Activated CD4-positive, alpha-beta T cell treated with anti-CD3 and anti-CD28 coated beads, Interleukin-2, amount 10 ng/mL, durations not matched to agents 24 days and 14 days (primary cell): ENCODE measurements at regions of chr3 and their contacts with region 1.

Region 1: GRCh38 chr3:142993958-142994442 is 7.4 kb upstream of the U2SURP start:
- DNase-seq: peak; percentile 88
- H3K4me3 Mint-ChIP-seq: no peak overlapping the region
- H3K27ac Mint-ChIP-seq: no peak overlapping the region
- H3K4me1 Mint-ChIP-seq: peaks cover 4% of the 10 kb centered on the region
- H3K27me3 Mint-ChIP-seq: peaks cover 22% of the 10 kb centered on the region

Region 2: DNA sequence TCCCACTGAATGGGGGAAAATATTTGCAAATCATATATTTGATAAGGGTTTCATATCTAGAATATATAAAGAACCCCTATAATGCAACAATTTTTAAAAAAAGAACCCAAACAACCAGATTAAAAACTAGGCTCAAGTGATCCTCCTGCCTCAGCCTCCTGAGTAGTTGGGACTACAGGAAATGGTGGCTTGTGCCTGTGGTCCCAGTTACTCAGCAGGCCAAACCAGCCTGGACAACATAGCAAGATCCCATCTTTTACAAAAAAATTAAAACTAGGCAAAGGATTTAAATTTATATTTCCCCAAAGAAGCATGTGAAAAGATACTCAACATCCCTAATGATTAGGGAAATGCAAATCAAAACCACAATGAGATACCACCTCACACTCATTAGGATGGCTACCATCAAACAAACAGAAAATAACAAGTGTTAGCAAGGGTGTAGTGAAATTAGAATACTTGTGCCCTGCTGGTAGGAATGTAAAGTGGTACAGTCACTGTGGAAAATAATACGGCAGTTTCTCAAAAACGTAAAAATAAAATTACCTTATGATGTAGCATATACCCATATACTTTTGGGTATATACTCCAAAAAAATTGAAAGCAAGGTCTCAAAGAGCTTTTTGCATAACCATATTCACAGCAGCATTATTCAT is 864.4 kb before region 1 on chr3:
- intact Hi-C with region 1: loop called (anchors 5 kb)
- DNase-seq: no peak
- H3K4me3 Mint-ChIP-seq: no peak overlapping the region
- H3K27ac Mint-ChIP-seq: no peak overlapping the region
- H3K4me1 Mint-ChIP-seq: peaks cover 2% of the 10 kb centered on the region
- H3K27me3 Mint-ChIP-seq: no peaks in the 10 kb centered on the region

Region 3: GRCh38 chr3:142586803-142587406 is 407.1 kb before region 1 on chr3:
- intact Hi-C with region 1: loop called (anchors 5 kb)
- DNase-seq: peak; percentile 75
- H3K4me3 Mint-ChIP-seq: no peak overlapping the region
- H3K27ac Mint-ChIP-seq: no peak overlapping the region
- H3K4me1 Mint-ChIP-seq: no peaks in the 10 kb centered on the region
- H3K27me3 Mint-ChIP-seq: peaks cover 33% of the 10 kb centered on the region

Region 4: DNA sequence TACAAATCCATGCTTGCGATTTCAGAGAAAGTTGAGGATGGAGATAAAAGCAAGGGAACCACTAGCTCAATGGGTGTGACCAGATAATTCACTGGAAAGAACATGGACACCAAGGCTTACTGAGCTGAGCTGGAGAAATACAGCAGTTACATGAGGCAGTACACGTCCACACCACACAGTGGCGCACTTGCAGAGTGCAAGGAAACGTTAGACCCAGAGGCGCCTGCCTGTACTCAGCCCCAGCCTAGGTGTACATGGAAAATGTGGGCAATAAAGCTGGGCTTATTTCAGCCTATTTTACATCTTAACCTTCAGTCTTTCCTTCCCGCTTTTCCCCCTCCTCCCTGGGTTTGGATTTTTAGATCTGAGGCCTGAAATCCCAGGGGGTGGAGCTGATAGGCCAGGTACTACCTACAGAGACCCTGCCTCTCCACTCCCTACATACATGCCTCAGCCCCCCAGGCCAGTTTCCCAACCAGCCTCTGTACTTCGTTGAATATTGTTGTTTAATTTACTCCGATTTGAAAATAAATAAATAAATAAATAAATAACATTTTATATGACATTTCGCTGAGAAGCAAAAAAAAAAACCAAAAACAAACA is 165.2 kb before region 1 on chr3:
- intact Hi-C with region 1: loop called (anchors 2 kb)
- DNase-seq: peak; percentile 90
- H3K4me3 Mint-ChIP-seq: no peak overlapping the region
- H3K27ac Mint-ChIP-seq: no peak overlapping the region
- H3K4me1 Mint-ChIP-seq: no peaks in the 10 kb centered on the region
- H3K27me3 Mint-ChIP-seq: peaks cover 12% of the 10 kb centered on the region

Region 5: DNA sequence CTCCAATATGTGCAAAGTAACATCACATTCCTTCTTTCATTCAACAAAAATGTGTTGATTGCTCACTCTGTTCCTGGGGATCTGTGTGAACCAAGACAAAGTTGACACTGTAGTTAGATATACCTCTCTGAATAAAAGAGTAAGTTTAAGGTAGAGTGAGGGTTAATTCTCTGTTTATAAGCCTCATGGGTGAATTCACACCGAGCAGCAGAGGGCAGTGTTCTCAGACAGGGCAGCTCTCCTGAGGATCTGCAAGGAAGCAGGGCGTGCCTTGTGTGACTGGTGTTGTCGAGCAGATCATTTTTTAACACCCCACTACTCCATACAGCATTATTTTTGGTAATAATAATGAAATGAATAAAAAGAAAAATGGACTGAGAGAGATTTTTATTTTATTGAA is 64.9 kb before region 1 on chr3:
- intact Hi-C with region 1: loop called (anchors 2 kb)
- DNase-seq: peak; percentile 78
- H3K4me3 Mint-ChIP-seq: no peak overlapping the region
- H3K27ac Mint-ChIP-seq: no peak overlapping the region
- H3K4me1 Mint-ChIP-seq: no peaks in the 10 kb centered on the region
- H3K27me3 Mint-ChIP-seq: peaks cover 23% of the 10 kb centered on the region